Natural killer cell (primary cell): ENCODE measurements at regions of chr10 and their contacts with region 1.

Region 1: GRCh38 chr10:13659897-13660550 is 73.3 kb downstream of the PRPF18 start:
- DNase-seq: peak; percentile 59 to 78
- ATAC-seq: peak; percentile 74 to 87 (median 82)
- H3K4me3 ChIP-seq: no peak overlapping the region
- H3K4me3 Mint-ChIP-seq: no peak overlapping the region
- H3K27ac ChIP-seq: no peak overlapping the region
- H3K27ac Mint-ChIP-seq: peak overlapping the region in 1 of 2 donors; percentile 35
- H3K4me1 ChIP-seq: peaks cover 21% of the 10 kb centered on the region
- H3K4me1 Mint-ChIP-seq: peaks cover 10 to 11% of the 10 kb centered on the region in 2 donors
- H3K27me3 ChIP-seq: no peaks in the 10 kb centered on the region
- H3K27me3 Mint-ChIP-seq: no peaks in the 10 kb centered on the region
- CTCF ChIP-seq: peak; percentile 90

Region 2: GRCh38 chr10:13627459-13628310 is 32.3 kb before region 1 on chr10:
- intact Hi-C with region 1: no loop called
- DNase-seq: no peak
- ATAC-seq: no peak
- H3K4me3 ChIP-seq: no peak overlapping the region
- H3K4me3 Mint-ChIP-seq: no peak overlapping the region
- H3K27ac ChIP-seq: no peak overlapping the region
- H3K27ac Mint-ChIP-seq: no peak overlapping the region
- H3K4me1 ChIP-seq: no peaks in the 10 kb centered on the region
- H3K4me1 Mint-ChIP-seq: peaks cover 0 to 4% of the 10 kb centered on the region in 2 donors
- H3K27me3 ChIP-seq: no peaks in the 10 kb centered on the region
- H3K27me3 Mint-ChIP-seq: no peaks in the 10 kb centered on the region
- CTCF ChIP-seq: no peak

Region 3: GRCh38 chr10:13776861-13777311 is 116.9 kb after region 1 on chr10:
- intact Hi-C with region 1: loop called (anchors 1 kb)
- DNase-seq: no peak
- ATAC-seq: no peak
- H3K4me3 ChIP-seq: no peak overlapping the region
- H3K4me3 Mint-ChIP-seq: no peak overlapping the region
- H3K27ac ChIP-seq: no peak overlapping the region
- H3K27ac Mint-ChIP-seq: no peak overlapping the region
- H3K4me1 ChIP-seq: peaks cover 4% of the 10 kb centered on the region
- H3K4me1 Mint-ChIP-seq: no peaks in the 10 kb centered on the region
- H3K27me3 ChIP-seq: no peaks in the 10 kb centered on the region
- H3K27me3 Mint-ChIP-seq: peaks cover 22% of the 10 kb centered on the region in 2 donors
- CTCF ChIP-seq: no peak